ENCODE measurements at regions of chr14 and their contacts with region 1.

Region 1: DNA sequence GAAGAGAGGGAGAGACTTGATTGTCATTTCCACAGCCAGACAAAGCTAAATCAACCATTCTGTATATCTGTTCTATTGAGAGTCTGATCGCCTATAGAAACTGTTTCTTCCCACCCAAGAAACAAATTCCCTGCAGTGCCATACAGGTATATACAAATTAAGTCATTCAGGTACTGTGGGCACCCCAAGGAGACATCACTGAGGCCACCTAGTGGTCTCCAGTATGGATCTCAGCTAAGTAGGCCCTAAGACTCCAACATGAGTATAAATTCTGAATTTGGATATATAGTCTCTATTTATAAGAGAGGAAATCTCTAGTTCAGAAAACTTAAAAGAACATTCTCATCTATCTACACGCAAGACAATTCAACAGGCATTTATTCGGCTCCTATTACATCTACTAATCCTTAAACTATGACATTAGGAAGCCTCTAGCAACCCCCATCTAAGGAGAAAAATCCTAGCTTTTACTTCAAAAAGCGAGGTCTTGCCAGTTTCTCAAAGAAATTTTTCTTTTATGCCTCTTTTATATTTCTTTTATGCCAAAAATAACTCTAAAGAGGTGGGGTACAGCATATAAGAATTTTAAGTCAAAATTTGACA is 62.6 kb downstream of the DCAF5 start:
- DNase-seq: peak; percentile 82
- ATAC-seq: peak; percentile 76
- H3K4me3 ChIP-seq: no peak overlapping the region
- H3K27ac ChIP-seq: no peak overlapping the region
- H3K4me1 ChIP-seq: peaks cover 12% of the 10 kb centered on the region
- H3K27me3 ChIP-seq: no peaks in the 10 kb centered on the region
- CTCF ChIP-seq: peak; percentile 97

Region 2: GRCh38 chr14:68862954-68863594 is 227.2 kb before region 1 on chr14:
- CTCF ChIA-PET with region 1: no interaction called
- POLR2A ChIA-PET with region 1: interaction called, 4 read pairs
- intact Hi-C with region 1: loop called (anchors 1 kb)
- DNase-seq: peak; percentile 91
- ATAC-seq: peak; percentile 84
- H3K4me3 ChIP-seq: no peak overlapping the region
- H3K27ac ChIP-seq: no peak overlapping the region
- H3K4me1 ChIP-seq: no peaks in the 10 kb centered on the region
- H3K27me3 ChIP-seq: no peaks in the 10 kb centered on the region
- CTCF ChIP-seq: peak; percentile 91

Region 3: DNA sequence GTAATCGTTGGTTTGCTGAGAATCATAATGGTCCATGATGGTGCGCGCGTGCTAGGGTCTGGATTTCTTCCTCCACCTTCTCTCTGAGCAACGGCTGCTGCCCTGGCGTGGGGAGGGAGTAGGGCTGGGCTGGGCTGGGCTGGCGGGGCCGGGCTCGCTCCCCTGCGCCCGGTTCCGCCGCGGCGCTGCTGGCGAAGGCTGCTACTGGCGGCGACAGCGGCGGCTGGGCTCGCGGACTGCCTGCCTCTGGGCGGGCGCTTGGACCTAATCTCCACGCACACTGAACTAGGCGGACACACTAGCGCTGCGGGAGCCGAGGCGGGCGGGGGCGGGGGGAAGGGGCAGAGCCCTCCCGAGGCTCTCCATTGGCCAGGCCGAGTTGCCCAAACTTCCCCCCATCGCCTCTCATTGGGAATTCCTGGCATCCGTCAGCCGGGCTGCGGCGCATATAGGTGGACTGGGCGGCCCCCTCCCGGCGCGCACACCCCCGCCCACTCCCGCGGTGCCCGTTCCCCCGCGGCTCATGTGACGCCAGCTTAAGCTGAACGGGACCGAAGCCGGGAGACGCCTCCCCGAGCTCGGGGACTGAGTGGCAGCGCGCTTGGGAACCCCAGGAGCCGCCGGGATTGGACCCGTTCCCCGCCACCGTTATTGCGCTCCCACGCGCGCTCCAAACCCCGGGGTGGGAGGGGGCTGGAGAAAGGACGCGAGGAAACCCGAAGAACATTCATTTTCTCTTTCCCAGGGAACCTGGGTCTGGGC is 111.1 kb before region 1 on chr14 and contains the start of gene ACTN1:
- CTCF ChIA-PET with region 1: interaction called, 7 read pairs
- POLR2A ChIA-PET with region 1: no interaction called
- intact Hi-C with region 1: loop called (anchors 1 kb)
- DNase-seq: peak; percentile 98
- ATAC-seq: peak; percentile 68
- H3K4me3 ChIP-seq: peak within 1 kb of the TSS; percentile 98
- H3K27ac ChIP-seq: peak within 1 kb of the TSS; percentile 96
- H3K4me1 ChIP-seq: peaks cover 40% of the 10 kb centered on the region
- H3K27me3 ChIP-seq: no peaks in the 10 kb centered on the region
- CTCF ChIP-seq: no peak
- total RNA-seq, gene ACTN1: 303 and 400 TPM in 2 replicates

Region 4: DNA sequence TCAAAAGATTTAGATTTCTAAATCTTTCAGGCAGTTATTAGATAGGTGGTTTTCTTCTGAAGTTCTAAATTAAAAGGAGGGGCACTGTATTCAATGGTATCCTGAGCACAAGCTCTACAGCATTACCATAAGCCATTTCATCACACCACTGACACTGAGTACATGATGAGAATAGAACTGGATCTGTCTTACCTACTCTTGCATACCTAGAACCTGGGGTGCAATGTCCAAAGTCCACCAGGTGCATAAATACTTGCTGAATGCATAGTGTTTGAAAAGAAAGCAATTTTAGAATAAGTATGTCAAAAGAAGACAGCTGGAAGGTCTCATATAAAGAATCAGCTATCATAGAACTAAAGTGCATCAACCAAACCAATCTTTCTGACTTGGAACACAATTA is 25.7 kb before region 1 on chr14:
- CTCF ChIA-PET with region 1: no interaction called
- POLR2A ChIA-PET with region 1: no interaction called
- intact Hi-C with region 1: no loop called
- DNase-seq: no peak
- ATAC-seq: no peak
- H3K4me3 ChIP-seq: no peak overlapping the region
- H3K27ac ChIP-seq: no peak overlapping the region
- H3K4me1 ChIP-seq: peaks cover 9% of the 10 kb centered on the region; the same call in 1 of the 2 replicates
- H3K27me3 ChIP-seq: no peaks in the 10 kb centered on the region
- CTCF ChIP-seq: no peak

Region 5: DNA sequence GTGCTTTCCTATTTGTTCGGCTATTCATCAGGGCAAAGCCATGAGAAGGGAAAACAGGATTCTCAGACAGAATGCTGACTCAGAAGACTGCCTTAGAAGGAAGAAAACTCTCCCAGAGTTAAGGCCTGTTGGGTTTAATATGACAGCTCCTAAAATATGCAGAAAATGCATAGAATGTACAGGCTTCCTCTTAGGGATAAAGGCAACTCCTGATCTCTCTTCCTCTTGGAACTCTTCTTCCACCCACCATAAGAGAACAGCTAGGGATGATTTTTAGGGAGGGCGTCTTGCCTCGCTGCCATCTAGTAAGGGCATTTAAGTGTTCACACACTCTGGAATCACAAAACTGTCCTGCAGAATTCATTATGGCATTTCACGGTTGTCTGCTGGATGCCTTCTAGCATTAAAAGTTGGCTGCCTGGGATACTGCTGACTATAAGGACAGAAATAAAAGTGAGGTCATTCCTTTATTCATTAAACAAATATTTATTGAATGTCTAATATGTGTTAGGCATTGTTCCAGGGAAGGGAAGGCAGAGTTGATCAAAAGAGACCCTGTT is 11.0 kb before region 1 on chr14:
- CTCF ChIA-PET with region 1: interaction called, 5 read pairs
- POLR2A ChIA-PET with region 1: interaction called, 4 read pairs
- intact Hi-C with region 1: loop called (anchors 1 kb)
- DNase-seq: peak; percentile 95
- ATAC-seq: peak; percentile 80
- H3K4me3 ChIP-seq: peak overlapping the region; percentile 50
- H3K27ac ChIP-seq: peak overlapping the region; percentile 94
- H3K4me1 ChIP-seq: peaks cover 52% of the 10 kb centered on the region
- H3K27me3 ChIP-seq: no peaks in the 10 kb centered on the region
- CTCF ChIP-seq: no peak

Region 6: GRCh38 chr14:70171726-70172125 is 1081.4 kb after region 1 on chr14:
- CTCF ChIA-PET with region 1: no interaction called
- POLR2A ChIA-PET with region 1: no interaction called
- intact Hi-C with region 1: no loop called
- DNase-seq: no peak
- ATAC-seq: no peak
- H3K4me3 ChIP-seq: no peak overlapping the region
- H3K27ac ChIP-seq: no peak overlapping the region
- H3K4me1 ChIP-seq: no peaks in the 10 kb centered on the region
- H3K27me3 ChIP-seq: peaks cover 82% of the 10 kb centered on the region
- CTCF ChIP-seq: no peak